ENCODE measurements at regions of chr6 and their contacts with region 1.

Region 1: GRCh38 chr6:53171605-53172446 is 23.2 kb upstream of the GCM1 start:
- DNase-seq: peak; percentile 81 to 92 (median 87)
- H3K4me3 ChIP-seq: no peak overlapping the region
- H3K4me3 Mint-ChIP-seq: no peak overlapping the region
- H3K27ac ChIP-seq: no peak overlapping the region
- H3K27ac Mint-ChIP-seq: no peak overlapping the region
- H3K4me1 ChIP-seq: no peaks in the 10 kb centered on the region
- H3K4me1 Mint-ChIP-seq: no peaks in the 10 kb centered on the region
- H3K27me3 ChIP-seq: no peaks in the 10 kb centered on the region
- H3K27me3 Mint-ChIP-seq: no peaks in the 10 kb centered on the region

Region 2: GRCh38 chr6:53484476-53485280 is 312.9 kb after region 1 on chr6:
- CTCF ChIA-PET with region 1: interaction called, 87 read pairs
- POLR2A ChIA-PET with region 1: no interaction called
- DNase-seq: peak; percentile 50 to 71 (median 63)
- H3K4me3 ChIP-seq: no peak overlapping the region
- H3K4me3 Mint-ChIP-seq: no peak overlapping the region
- H3K27ac ChIP-seq: no peak overlapping the region
- H3K27ac Mint-ChIP-seq: no peak overlapping the region
- H3K4me1 ChIP-seq: no peaks in the 10 kb centered on the region
- H3K4me1 Mint-ChIP-seq: peaks cover 6 to 12% (median 9%) of the 10 kb centered on the region in 3 donors
- H3K27me3 ChIP-seq: no peaks in the 10 kb centered on the region
- H3K27me3 Mint-ChIP-seq: peaks cover 19 to 52% of the 10 kb centered on the region in 2 donors

Measured in CD8-positive, alpha-beta memory T cell (primary cell).